Left ventricle myocardium inferior (tissue), 1 donor: ENCODE measurements at regions of chr2 and their contacts with region 1.

Region 1: DNA sequence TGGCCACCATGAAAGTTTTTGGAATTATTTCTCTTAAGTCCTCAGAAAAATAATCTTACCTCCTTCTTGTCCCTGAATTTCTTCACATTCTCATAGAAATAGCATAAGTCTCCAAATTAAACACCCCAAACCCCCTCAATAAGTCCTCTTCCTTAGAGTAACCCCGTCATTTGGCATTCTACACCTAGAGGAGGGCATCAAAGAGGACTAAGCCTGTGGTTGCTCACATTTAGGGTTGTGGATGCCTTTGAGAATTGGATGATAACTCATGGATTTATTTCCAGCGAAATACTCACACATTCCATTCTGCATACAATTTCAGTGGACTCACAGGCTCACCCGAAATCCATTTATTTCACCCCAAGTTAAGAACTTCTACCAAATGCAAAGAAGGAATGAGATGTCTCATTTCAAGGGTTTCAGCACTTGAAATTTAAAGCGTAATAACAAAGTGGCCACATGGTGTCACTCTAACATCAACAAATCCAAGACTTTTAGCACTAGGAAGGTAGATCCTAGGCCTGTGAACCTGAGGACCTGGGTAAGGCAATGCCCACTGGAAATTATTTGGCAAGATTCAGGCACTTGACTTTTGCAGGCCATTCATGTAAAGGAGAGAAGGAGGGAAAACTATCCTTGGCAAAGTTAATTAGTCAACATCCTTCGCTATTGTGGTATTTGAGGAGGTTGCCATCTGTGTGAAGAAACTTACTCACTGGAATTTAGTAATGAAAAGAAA is 24.6 kb downstream of the DYTN start:
- DNase-seq: no peak
- H3K4me3 ChIP-seq: no peak overlapping the region
- H3K27ac ChIP-seq: no peak overlapping the region
- H3K4me1 ChIP-seq: no peaks in the 10 kb centered on the region
- H3K27me3 ChIP-seq: peaks cover under 1% of the 10 kb centered on the region
- CTCF ChIP-seq: peak; percentile 70

Region 2: DNA sequence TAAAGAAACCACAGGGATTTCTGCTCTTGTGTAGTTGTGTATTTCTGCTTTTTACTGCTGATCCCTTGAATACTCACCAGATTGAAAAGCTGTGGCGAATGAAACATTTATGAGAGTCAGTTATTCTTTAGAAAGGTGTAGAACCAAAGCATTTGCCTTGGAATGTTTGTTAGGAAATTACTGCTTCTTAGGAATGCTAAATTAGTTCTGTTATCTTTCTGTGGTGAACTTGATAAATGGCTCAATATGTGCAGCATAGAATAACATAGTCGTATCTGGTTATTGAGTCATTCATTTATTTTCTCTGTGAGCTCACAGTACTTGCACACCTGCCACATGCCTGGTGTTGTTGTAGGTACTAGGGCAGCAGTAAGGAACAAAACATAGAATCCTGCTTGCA is 108.2 kb before region 1 on chr2:
- intact Hi-C with region 1: no loop called
- DNase-seq: no peak
- H3K4me3 ChIP-seq: no peak overlapping the region
- H3K27ac ChIP-seq: no peak overlapping the region
- H3K4me1 ChIP-seq: peaks cover 48% of the 10 kb centered on the region
- H3K27me3 ChIP-seq: no peaks in the 10 kb centered on the region
- CTCF ChIP-seq: no peak

Region 3: DNA sequence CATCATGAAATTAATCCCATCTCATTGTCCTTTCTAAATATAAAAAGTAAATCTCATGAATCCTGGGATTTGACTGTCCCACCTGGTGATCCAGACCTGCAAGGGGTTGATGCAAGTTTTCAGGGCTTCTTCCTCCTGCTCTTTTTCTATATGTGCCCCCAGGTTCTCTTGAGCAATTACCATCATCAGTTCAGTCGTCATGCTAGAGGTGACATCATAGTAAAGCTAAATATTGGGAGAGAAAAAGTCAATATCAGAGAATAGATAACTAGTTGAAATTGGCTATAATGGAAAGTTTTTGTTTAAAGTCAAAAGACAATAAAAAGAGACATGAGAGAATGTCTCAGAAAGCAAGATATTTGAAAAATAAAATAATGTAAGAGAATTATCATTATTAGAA is 63.2 kb after region 1 on chr2:
- intact Hi-C with region 1: no loop called
- DNase-seq: no peak
- H3K4me3 ChIP-seq: no peak overlapping the region
- H3K27ac ChIP-seq: no peak overlapping the region
- H3K4me1 ChIP-seq: no peaks in the 10 kb centered on the region
- H3K27me3 ChIP-seq: no peaks in the 10 kb centered on the region
- CTCF ChIP-seq: no peak

Region 4: DNA sequence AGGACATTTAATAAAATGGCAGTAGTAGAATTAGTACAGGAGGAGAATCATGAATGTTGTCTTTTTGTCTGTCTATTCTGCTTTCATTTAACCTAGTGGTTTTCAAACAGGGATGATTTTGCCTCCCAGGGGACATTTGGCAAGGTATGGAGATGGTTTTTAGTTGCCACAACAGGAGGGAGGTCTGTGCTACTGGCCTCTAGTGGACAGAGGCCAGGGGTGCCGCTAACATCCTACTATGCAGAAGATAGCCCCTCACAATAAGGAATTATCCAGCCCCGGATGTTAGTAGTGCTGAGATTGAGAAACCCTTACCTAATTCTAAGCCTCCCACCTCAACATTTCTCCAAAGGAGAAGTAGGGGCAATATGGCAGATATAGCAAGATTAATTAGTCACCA is 90.2 kb after region 1 on chr2:
- intact Hi-C with region 1: loop called (anchors 5 kb)
- DNase-seq: no peak
- H3K4me3 ChIP-seq: no peak overlapping the region
- H3K27ac ChIP-seq: no peak overlapping the region
- H3K4me1 ChIP-seq: no peaks in the 10 kb centered on the region
- H3K27me3 ChIP-seq: no peaks in the 10 kb centered on the region
- CTCF ChIP-seq: peak; percentile 55

Region 5: DNA sequence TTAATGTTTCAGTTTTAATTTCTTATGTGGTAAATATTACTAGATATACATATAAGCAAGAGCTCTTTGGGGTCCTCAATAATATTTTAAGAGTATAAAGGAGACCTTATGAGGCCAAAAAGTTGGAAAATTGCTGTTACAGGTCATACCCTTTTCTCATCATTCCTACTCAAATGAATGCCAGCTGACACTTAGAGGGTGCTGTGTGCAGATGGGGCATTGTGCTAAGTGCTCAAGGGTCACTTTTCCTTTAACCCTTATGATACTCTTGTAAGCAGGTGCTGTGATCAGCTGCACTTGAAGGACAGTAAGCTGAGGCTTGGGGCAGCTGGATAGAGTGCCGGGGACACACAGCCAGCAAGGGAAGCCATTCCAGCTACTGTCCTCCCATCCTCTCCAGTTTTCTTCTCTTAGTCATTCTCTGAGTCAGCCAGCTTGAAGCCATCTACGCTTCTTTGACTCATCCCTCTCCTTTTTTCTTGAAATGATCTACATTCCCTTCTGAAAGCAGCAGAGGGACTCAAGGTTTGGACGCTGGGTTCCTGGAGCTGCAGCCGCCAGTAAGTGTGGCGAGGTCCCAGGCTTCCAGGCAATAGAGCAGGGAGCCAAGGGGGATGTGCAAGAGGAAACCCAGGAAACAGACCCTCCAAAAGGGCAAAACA is 794.2 kb after region 1 on chr2:
- intact Hi-C with region 1: loop called (anchors 10 kb)
- DNase-seq: no peak
- H3K4me3 ChIP-seq: no peak overlapping the region
- H3K27ac ChIP-seq: peak overlapping the region; percentile 82
- H3K4me1 ChIP-seq: peaks cover 28% of the 10 kb centered on the region
- H3K27me3 ChIP-seq: no peaks in the 10 kb centered on the region
- CTCF ChIP-seq: no peak